ENCODE measurements at regions of chrX and their contacts with region 1.

Region 1: GRCh38 chrX:123764967-123765871 is 32.4 kb upstream of the THOC2 start:
- DNase-seq: peak; percentile 81
- H3K4me3 Mint-ChIP-seq: peak overlapping the region; percentile 71
- H3K27ac Mint-ChIP-seq: peak overlapping the region; percentile 79
- H3K4me1 Mint-ChIP-seq: peaks cover 7% of the 10 kb centered on the region
- H3K27me3 Mint-ChIP-seq: no peaks in the 10 kb centered on the region

Region 2: DNA sequence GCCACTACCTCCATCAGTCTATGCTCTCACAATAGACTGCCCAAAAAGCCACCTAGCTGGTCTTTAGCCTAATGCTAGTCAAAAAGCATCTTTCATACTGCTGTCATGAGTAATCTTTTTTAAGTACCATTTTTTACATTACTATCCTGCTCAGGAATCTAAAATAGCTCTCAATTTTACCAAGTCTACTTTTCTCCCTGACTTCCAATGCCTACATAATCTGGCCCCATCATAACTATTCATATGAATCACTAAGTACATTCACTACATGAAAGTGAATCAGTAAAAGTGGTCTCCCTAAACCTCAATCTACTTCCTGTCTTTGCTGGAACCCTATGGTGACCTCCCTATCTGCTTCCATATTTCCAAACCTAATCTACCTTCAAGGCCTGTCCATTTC is 138.3 kb before region 1 on chrX:
- CTCF ChIA-PET with region 1: no interaction called
- POLR2A ChIA-PET with region 1: no interaction called
- intact Hi-C with region 1: loop called (anchors 1 kb)
- DNase-seq: no peak
- H3K4me3 Mint-ChIP-seq: no peak overlapping the region
- H3K27ac Mint-ChIP-seq: peak overlapping the region; percentile 15
- H3K4me1 Mint-ChIP-seq: peaks cover 14% of the 10 kb centered on the region
- H3K27me3 Mint-ChIP-seq: no peaks in the 10 kb centered on the region

Region 3: GRCh38 chrX:123779908-123780396 is 14.7 kb after region 1 on chrX:
- CTCF ChIA-PET with region 1: interaction called, 18 read pairs
- POLR2A ChIA-PET with region 1: no interaction called
- intact Hi-C with region 1: no loop called
- DNase-seq: no peak
- H3K4me3 Mint-ChIP-seq: no peak overlapping the region
- H3K27ac Mint-ChIP-seq: no peak overlapping the region
- H3K4me1 Mint-ChIP-seq: no peaks in the 10 kb centered on the region
- H3K27me3 Mint-ChIP-seq: no peaks in the 10 kb centered on the region

Measured in activated CD4-positive, alpha-beta memory T cell treated with anti-CD3 and anti-CD28 coated beads for 36 hours (primary cell).